Panc1 (cell line): ENCODE measurements at regions of chr21 and their contacts with region 1.

Region 1: DNA sequence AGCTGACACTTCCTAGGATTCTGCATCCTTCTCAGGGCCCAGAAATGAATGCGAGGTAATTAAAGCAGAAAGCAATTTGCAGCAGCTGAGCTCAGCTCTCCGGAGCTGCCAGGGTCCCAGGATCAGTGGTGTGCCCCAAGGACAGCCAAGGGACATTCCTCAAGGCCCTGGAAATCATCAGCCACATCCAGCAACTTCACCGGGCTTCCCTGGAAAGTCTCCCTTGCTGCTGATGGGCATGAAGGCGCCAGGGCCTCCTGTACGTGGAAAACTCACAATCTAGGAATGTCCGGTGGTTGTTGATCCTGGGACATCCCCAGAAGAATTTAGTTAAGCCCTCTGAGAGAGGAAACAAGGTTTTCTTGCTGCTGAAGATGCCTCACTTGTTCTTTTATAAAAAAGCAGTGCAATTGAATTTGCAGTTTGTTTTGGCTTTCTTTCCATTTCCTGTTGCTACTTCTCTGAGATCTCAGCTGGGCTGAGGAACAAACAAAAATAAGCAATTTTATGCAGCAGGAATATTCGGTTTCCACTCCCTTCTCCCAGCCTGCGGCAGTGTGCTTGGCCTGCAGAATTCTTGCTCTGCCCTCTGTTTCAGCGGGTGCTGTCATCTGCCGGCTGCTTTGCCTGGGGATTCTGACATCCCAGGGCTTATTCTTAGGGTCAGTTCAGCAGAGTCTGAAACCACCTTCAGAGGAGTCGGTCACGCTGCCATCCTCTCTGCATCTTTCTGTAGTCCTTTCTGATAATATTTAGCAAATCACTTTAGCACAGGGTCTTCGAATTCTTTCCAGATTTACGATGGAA is 85.9 kb downstream of the TCP10L start:
- DNase-seq: no peak
- ATAC-seq: no peak
- H3K4me3 ChIP-seq: no peak overlapping the region
- H3K27ac ChIP-seq: no peak overlapping the region
- H3K4me1 ChIP-seq: peaks cover 9% of the 10 kb centered on the region
- H3K27me3 ChIP-seq: no peaks in the 10 kb centered on the region
- CTCF ChIP-seq: no peak

Region 2: GRCh38 chr21:33035147-33035546 is 535.7 kb after region 1 on chr21:
- CTCF ChIA-PET with region 1: no interaction called
- POLR2A ChIA-PET with region 1: interaction called, 10 read pairs
- in situ Hi-C with region 1: no loop called
- intact Hi-C with region 1: no loop called
- DNase-seq: no peak
- ATAC-seq: no peak
- H3K4me3 ChIP-seq: no peak overlapping the region
- H3K27ac ChIP-seq: no peak overlapping the region
- H3K4me1 ChIP-seq: no peaks in the 10 kb centered on the region
- H3K27me3 ChIP-seq: no peaks in the 10 kb centered on the region
- CTCF ChIP-seq: no peak